Ovary (tissue), 10 donors: ENCODE measurements at regions of chr10 and their contacts with region 1.

Region 1: DNA sequence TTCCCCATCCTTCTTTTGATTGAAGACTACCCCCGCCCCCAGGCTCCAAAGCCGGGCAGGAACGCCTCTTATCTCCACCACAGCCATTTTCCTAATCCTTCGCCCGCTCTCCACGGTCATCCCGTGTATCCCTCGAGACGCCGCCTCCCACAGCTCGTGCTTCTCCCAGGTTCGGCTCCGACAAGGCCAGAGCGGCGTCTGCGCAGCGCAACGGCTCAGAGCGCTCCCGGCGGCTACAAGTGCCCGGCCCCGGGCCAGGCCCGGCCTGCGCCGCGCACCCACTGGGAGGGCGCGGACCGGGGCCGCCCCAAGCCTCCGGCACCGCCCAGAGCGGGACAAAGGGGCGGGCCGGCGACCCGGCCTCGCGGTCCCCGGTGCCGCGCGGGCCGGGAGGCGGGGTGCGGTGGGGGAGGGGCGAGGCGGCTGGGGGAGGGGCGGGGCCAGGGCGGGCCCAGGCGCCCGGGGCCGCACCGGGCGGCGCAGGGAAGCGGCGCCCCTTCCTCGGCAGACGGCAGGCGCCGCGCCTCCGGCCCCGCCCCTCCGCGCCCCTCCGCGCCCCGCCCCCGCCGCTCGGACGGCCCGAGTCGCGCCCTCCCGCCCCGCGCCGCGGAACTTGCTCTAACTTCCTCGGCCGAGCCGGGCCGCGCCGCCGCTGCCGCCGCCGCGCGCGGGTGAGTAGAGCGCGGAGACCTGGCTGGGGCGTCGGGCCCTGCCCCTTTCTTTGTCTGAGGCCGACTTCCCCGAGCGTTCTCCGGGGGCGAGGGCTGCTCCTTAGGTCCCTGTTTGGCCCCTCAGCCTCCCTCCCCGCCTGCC is at the start of gene TSPAN14:
- DNase-seq: peak; percentile 86 to 91 (median 89)
- H3K4me3 ChIP-seq: peak within 1 kb of the TSS; percentile 97
- H3K27ac ChIP-seq: peak within 1 kb of the TSS; percentile 94 to 97
- H3K4me1 ChIP-seq: peaks cover 13% of the 10 kb centered on the region
- H3K27me3 ChIP-seq: no peaks in the 10 kb centered on the region
- CTCF ChIP-seq: no peak
- EP300 ChIP-seq: no peak
- POLR2A ChIP-seq: peak; percentile 58
- total RNA-seq, gene TSPAN14: 38.5 to 103 (median 74.8) TPM

Region 2: GRCh38 chr10:80408242-80409101 is 45.4 kb before region 1 on chr10 and contains the start of gene PRXL2A:
- intact Hi-C with region 1: loop called in 1 of 4 experiments (anchors 5 kb)
- DNase-seq: peak; percentile 87 to 90 (median 88)
- H3K4me3 ChIP-seq: peak within 1 kb of the TSS; percentile 88
- H3K27ac ChIP-seq: peak within 1 kb of the TSS; percentile 75 to 81
- H3K4me1 ChIP-seq: peaks cover 17% of the 10 kb centered on the region
- H3K27me3 ChIP-seq: no peaks in the 10 kb centered on the region
- CTCF ChIP-seq: peak in 1 of 3 donors; percentile 7
- EP300 ChIP-seq: no peak
- POLR2A ChIP-seq: peak; percentile 26
- total RNA-seq, gene PRXL2A: 26.7 to 54.9 (median 43.7) TPM